Activated naive CD4-positive, alpha-beta T cell treated with anti-CD3 and anti-CD28 coated beads for 36 hours (primary cell): ENCODE measurements at regions of chr3 and their contacts with region 1.

Region 1: GRCh38 chr3:23999012-23999641 is 54.0 kb downstream of the NR1D2 start:
- DNase-seq: peak; percentile 88
- H3K4me3 Mint-ChIP-seq: no peak overlapping the region
- H3K27ac Mint-ChIP-seq: no peak overlapping the region
- H3K4me1 Mint-ChIP-seq: peaks cover 8% of the 10 kb centered on the region
- H3K27me3 Mint-ChIP-seq: peaks cover 8% of the 10 kb centered on the region

Region 2: GRCh38 chr3:23916886-23917678 is 82.0 kb before region 1 on chr3 and contains the starts of genes NKIRAS1 and RPL15:
- CTCF ChIA-PET with region 1: no interaction called
- intact Hi-C with region 1: no loop called
- DNase-seq: peak; percentile 97
- H3K4me3 Mint-ChIP-seq: peak within 1 kb of the TSS; percentile 94
- H3K27ac Mint-ChIP-seq: peak within 1 kb of the TSS; percentile 99
- H3K4me1 Mint-ChIP-seq: peaks cover 47% of the 10 kb centered on the region
- H3K27me3 Mint-ChIP-seq: no peaks in the 10 kb centered on the region
- total RNA-seq, gene NKIRAS1: 2.4 to 3.1 TPM
- total RNA-seq, gene RPL15: 2,861 to 2,959 TPM

Region 3: GRCh38 chr3:24149032-24149431 is 149.9 kb after region 1 on chr3:
- CTCF ChIA-PET with region 1: interaction called, 4 read pairs
- intact Hi-C with region 1: loop called (anchors 1 kb)
- DNase-seq: no peak
- H3K4me3 Mint-ChIP-seq: no peak overlapping the region
- H3K27ac Mint-ChIP-seq: no peak overlapping the region
- H3K4me1 Mint-ChIP-seq: peaks cover 8% of the 10 kb centered on the region
- H3K27me3 Mint-ChIP-seq: peaks cover 2% of the 10 kb centered on the region

Region 4: GRCh38 chr3:24264748-24265158 is 265.6 kb after region 1 on chr3:
- CTCF ChIA-PET with region 1: interaction called, 6 read pairs
- intact Hi-C with region 1: loop called (anchors 1 kb)
- DNase-seq: no peak
- H3K4me3 Mint-ChIP-seq: no peak overlapping the region
- H3K27ac Mint-ChIP-seq: no peak overlapping the region
- H3K4me1 Mint-ChIP-seq: no peaks in the 10 kb centered on the region
- H3K27me3 Mint-ChIP-seq: peaks cover 7% of the 10 kb centered on the region

Region 5: GRCh38 chr3:25751725-25752124 is 1752.6 kb after region 1 on chr3:
- CTCF ChIA-PET with region 1: no interaction called
- intact Hi-C with region 1: no loop called
- DNase-seq: no peak
- H3K4me3 Mint-ChIP-seq: no peak overlapping the region
- H3K27ac Mint-ChIP-seq: no peak overlapping the region
- H3K4me1 Mint-ChIP-seq: peaks cover 2% of the 10 kb centered on the region
- H3K27me3 Mint-ChIP-seq: no peaks in the 10 kb centered on the region